CD4-positive, alpha-beta T cell (primary cell): ENCODE measurements at regions of chr11 and their contacts with region 1.

Region 1: DNA sequence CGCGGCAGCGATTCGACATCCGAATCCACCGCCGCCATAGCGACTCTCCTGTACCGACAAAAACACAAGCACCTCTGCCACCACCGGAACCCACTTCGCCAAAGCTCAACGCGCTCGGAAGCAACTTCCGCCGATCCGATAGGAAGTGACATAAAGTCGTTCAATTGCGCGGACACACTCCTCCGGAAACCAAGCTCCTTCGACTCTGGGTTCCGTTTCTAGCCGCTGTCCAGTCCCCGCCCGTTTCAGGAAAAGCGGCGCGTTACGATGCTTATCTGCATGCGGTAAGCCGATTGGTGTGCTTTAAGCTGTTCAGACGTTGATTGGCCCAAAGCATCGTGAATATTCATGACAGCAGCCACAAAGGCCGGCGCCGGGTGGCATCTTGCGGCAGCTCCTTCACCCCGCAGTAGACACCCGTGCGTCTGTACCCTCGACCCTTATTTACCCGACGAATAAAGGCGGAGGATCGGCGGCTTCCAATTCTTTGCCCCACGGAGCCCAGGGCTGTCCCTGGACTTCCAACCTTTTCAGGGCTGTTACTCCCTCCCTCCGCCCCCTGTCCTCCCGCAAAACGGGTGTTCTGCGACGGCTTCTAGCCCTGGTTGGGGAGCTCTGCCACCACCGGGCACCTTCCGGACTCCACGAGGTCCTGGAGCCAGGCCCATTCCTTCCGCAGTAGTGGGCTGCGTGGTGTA is at the start of gene TUT1:
- DNase-seq: peak; percentile 91 to 99 (median 95)
- ATAC-seq: peak; percentile 82
- H3K4me3 ChIP-seq: peak within 1 kb of the TSS; percentile 98
- H3K4me3 Mint-ChIP-seq: peak within 1 kb of the TSS; percentile 91
- H3K27ac ChIP-seq: peak within 1 kb of the TSS; percentile 95 to 97
- H3K27ac Mint-ChIP-seq: peak within 1 kb of the TSS; percentile 89
- H3K4me1 ChIP-seq: peaks cover 43% of the 10 kb centered on the region
- H3K4me1 Mint-ChIP-seq: peaks cover 72% of the 10 kb centered on the region
- H3K27me3 ChIP-seq: no peaks in the 10 kb centered on the region
- H3K27me3 Mint-ChIP-seq: no peaks in the 10 kb centered on the region
- CTCF ChIP-seq: no peak
- total RNA-seq, gene TUT1: 25.5 to 26.2 TPM

Region 2: DNA sequence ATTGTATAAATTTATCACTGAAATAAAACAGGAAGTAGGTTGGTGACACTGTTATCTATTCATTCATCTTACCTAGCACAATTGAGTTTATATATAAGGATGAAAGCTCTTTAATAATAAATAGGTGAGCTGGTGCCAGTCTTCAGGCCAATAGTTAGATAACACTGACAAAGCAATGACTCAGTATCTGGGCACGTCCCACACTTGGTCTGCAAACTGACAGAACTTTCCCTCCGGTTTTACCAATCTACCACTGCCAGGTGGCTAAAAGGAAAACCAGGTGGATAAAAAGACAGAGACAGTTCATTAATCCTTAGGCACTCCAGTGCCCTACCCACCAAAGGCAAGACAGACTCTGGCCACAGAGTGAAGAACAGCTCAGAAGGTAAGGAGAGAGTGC is 1276.3 kb before region 1 on chr11:
- CTCF ChIA-PET with region 1: no interaction called
- POLR2A ChIA-PET with region 1: no interaction called
- intact Hi-C with region 1: no loop called
- DNase-seq: no peak
- ATAC-seq: no peak
- H3K4me3 ChIP-seq: no peak overlapping the region
- H3K4me3 Mint-ChIP-seq: no peak overlapping the region
- H3K27ac ChIP-seq: no peak overlapping the region
- H3K27ac Mint-ChIP-seq: no peak overlapping the region
- H3K4me1 ChIP-seq: no peaks in the 10 kb centered on the region
- H3K4me1 Mint-ChIP-seq: no peaks in the 10 kb centered on the region
- H3K27me3 ChIP-seq: no peaks in the 10 kb centered on the region
- H3K27me3 Mint-ChIP-seq: no peaks in the 10 kb centered on the region
- CTCF ChIP-seq: no peak

Region 3: DNA sequence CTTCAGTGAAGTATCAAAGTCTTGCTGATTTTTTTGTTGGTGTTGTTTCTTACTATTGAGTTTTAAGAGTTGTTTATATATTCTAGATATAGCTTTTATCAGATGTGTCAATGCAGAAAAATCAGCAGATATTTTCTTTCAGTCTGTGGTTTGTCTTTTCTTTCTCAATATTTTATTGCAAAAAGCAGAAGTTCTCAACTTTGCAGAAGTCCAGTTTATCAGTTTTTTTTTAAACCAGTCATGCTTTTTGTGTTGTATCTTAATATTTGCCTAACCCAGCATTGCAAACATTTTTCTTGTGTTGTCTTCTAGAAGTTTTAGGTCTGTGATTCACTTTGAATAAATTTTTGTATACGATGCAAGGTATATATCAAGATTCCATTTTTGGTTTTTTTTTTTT is 247.4 kb before region 1 on chr11:
- CTCF ChIA-PET with region 1: no interaction called
- POLR2A ChIA-PET with region 1: no interaction called
- intact Hi-C with region 1: no loop called
- DNase-seq: no peak
- ATAC-seq: no peak
- H3K4me3 ChIP-seq: no peak overlapping the region
- H3K4me3 Mint-ChIP-seq: no peak overlapping the region
- H3K27ac ChIP-seq: no peak overlapping the region
- H3K27ac Mint-ChIP-seq: no peak overlapping the region
- H3K4me1 ChIP-seq: no peaks in the 10 kb centered on the region
- H3K4me1 Mint-ChIP-seq: no peaks in the 10 kb centered on the region
- H3K27me3 ChIP-seq: no peaks in the 10 kb centered on the region
- H3K27me3 Mint-ChIP-seq: peaks cover 9% of the 10 kb centered on the region
- CTCF ChIP-seq: no peak

Region 4: DNA sequence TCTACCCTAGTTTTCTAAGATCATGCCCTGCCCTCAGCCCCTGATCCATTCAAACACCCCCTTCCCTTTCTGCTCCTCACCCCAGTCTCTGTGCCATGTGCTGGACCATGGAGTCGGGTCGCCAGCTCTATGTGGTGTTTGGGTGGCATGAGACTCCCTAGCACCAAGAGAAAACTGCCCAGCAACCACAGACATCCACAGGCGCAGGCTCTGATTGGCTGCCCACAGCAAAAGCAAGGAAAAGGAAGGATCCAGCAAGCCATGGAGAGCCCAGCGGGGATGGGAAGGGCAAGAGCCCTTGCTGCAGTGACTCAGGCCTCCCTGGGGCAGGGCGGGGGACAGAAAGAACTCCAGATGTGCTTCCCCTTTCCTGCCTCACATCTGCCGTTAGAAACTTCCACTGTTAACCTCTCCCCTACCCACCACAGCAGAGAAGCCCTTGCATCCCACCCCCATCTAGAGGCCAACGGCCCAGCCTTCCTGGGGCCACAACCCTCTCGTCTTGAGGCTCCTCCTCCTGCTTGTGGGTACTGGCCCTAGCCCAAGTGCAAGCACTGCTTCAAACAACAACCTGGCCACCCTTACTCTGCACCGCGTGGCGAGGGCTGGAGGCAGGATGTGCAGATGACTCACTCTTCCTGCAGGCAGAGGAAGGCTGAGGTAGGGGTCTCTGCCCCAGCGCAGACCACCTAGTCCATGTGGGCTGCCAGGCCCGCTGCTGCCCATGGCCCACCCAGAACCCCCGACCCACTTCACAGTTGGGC is 35.3 kb before region 1 on chr11:
- CTCF ChIA-PET with region 1: interaction called, 11 read pairs
- POLR2A ChIA-PET with region 1: interaction called, 61 read pairs
- intact Hi-C with region 1: loop called in 1 of 2 experiments (anchors 5 kb)
- DNase-seq: peak; percentile 72 to 94 (median 83)
- ATAC-seq: peak; percentile 46
- H3K4me3 ChIP-seq: peak overlapping the region; percentile 49
- H3K4me3 Mint-ChIP-seq: peak overlapping the region; percentile 84
- H3K27ac ChIP-seq: peak overlapping the region; percentile 96 to 97
- H3K27ac Mint-ChIP-seq: peak overlapping the region; percentile 95
- H3K4me1 ChIP-seq: peaks cover 95% of the 10 kb centered on the region
- H3K4me1 Mint-ChIP-seq: peaks cover 84% of the 10 kb centered on the region
- H3K27me3 ChIP-seq: no peaks in the 10 kb centered on the region
- H3K27me3 Mint-ChIP-seq: no peaks in the 10 kb centered on the region
- CTCF ChIP-seq: no peak

Region 5: DNA sequence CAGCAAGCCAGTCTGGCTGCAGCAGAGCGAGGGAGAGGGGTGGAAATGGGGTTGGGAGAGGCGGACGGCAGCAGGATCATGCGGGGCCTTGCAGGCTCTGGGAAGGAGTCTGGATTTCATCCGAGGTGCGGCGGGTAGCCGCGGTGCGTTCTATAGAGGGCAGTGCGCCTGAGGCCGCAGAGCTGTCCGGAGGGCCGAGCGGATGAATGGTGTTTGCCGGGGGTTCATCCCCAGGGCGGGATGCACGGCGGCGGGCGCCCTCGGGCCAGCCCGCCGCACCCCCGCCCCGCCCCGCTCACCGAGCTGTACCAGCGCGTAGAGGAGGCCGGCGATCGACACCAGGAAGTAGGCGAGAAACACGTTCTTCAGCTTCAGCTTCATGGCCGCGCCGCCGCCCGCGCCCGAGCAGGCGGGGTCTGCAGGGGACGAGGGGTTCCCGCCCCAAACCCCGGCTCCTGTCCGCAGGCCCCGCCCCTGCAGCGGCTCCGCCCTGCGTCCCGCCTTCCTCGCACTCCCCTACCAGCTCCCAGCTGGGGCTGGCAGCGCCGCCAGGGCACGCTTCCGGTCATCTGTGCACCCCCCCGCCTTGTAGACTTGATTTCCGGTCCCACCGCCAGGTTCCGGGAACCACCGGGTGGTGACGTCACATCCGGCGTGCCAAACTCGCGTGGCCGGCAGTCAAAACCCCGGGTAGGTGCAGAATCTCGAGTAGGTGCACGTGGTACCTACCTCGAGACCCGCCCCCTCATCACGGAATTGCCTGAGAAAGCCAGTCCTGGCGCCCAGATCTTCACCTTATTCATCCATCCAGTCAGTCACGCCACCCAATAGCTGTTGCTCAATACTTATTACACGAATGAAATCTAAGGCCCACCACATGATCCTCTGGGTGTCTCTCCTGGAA is 30.2 kb after region 1 on chr11 and contains the start of gene B3GAT3:
- CTCF ChIA-PET with region 1: interaction called, 9 read pairs
- POLR2A ChIA-PET with region 1: interaction called, 80 read pairs
- intact Hi-C with region 1: loop called in 1 of 2 experiments (anchors 2 kb)
- DNase-seq: peak; percentile 91 to 99 (median 95)
- ATAC-seq: peak; percentile 82
- H3K4me3 ChIP-seq: peak within 1 kb of the TSS; percentile 69
- H3K4me3 Mint-ChIP-seq: peak within 1 kb of the TSS; percentile 95
- H3K27ac ChIP-seq: peak within 1 kb of the TSS; percentile 86 to 88
- H3K27ac Mint-ChIP-seq: peak within 1 kb of the TSS; percentile 89
- H3K4me1 ChIP-seq: peaks cover 32% of the 10 kb centered on the region
- H3K4me1 Mint-ChIP-seq: peaks cover 27% of the 10 kb centered on the region
- H3K27me3 ChIP-seq: no peaks in the 10 kb centered on the region
- H3K27me3 Mint-ChIP-seq: no peaks in the 10 kb centered on the region
- CTCF ChIP-seq: no peak
- total RNA-seq, gene B3GAT3: 47.2 to 49.5 TPM

Region 6: GRCh38 chr11:62665075-62665598 is 73.5 kb after region 1 on chr11 and contains the starts of genes C11orf98 and CSKMT:
- CTCF ChIA-PET with region 1: interaction called, 4 read pairs
- POLR2A ChIA-PET with region 1: interaction called, 155 read pairs
- intact Hi-C with region 1: loop called (anchors 5 kb)
- DNase-seq: peak; percentile 92 to 97 (median 94)
- ATAC-seq: peak; percentile 91
- H3K4me3 ChIP-seq: peak within 1 kb of the TSS; percentile 73
- H3K4me3 Mint-ChIP-seq: peak within 1 kb of the TSS; percentile 99
- H3K27ac ChIP-seq: peak within 1 kb of the TSS; percentile 80 to 88
- H3K27ac Mint-ChIP-seq: peak within 1 kb of the TSS; percentile 96
- H3K4me1 ChIP-seq: peaks cover 48% of the 10 kb centered on the region
- H3K4me1 Mint-ChIP-seq: peaks cover 36% of the 10 kb centered on the region
- H3K27me3 ChIP-seq: no peaks in the 10 kb centered on the region
- H3K27me3 Mint-ChIP-seq: no peaks in the 10 kb centered on the region
- CTCF ChIP-seq: no peak
- total RNA-seq, gene C11orf98: 14.3 to 18.5 TPM
- total RNA-seq, gene CSKMT: 17.8 to 18.8 TPM

Region 7: DNA sequence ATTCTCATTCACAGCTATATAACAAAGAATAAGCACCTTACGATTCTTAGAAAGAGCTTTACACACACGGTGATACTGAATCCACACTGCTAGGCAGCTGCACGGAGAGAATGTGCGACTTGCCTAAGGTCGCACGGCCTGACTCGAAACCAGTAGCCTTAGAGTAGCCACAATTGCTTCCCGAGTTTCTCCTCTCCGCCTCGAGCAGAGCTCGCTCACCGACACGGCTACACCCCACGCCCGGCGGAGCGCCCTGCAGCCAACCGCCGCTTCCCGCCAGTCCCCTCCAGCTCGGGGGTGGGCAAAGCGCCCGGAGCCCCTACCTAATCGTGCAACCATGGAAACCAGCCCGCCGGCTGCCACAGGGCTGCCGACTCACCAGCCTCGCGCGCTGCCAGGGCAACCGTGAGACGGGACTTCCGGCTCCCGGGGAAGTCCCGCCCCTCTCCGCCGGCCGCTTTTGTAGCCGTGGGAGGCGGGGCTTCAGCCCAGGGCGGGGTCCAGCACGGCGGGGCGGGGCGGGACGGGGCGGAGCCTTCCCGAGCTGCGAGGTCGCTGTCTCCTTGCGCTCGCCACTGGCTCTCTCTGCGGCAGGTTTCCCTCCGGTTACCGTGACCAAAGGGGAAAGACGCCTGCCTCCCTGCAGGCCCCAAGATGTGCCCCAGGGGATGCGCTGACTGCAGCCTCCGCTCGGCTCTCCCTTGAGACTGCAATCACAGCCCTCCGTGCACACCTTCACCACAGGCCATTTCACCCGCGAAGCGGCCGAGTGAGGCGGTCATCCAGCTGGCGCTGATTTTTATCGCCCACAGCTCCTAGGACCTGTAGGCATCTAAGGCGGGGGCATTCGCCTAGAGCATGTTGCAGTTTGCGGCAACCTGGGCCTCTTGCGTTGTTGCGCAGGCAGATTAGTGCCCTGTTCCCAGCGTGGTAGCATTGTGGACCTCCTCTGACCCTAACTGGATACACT is 114.6 kb after region 1 on chr11:
- CTCF ChIA-PET with region 1: interaction called, 3 read pairs
- POLR2A ChIA-PET with region 1: interaction called, 74 read pairs
- intact Hi-C with region 1: loop called (anchors 1 to 5 kb)
- DNase-seq: peak; percentile 90 to 97 (median 94)
- ATAC-seq: peak; percentile 62
- H3K4me3 ChIP-seq: peak overlapping the region; percentile 79
- H3K4me3 Mint-ChIP-seq: peak overlapping the region; percentile 86
- H3K27ac ChIP-seq: peak overlapping the region; percentile 65 to 84
- H3K27ac Mint-ChIP-seq: peak overlapping the region; percentile 92
- H3K4me1 ChIP-seq: peaks cover 49% of the 10 kb centered on the region
- H3K4me1 Mint-ChIP-seq: peaks cover 42% of the 10 kb centered on the region
- H3K27me3 ChIP-seq: no peaks in the 10 kb centered on the region
- H3K27me3 Mint-ChIP-seq: no peaks in the 10 kb centered on the region
- CTCF ChIP-seq: no peak

Region 8: DNA sequence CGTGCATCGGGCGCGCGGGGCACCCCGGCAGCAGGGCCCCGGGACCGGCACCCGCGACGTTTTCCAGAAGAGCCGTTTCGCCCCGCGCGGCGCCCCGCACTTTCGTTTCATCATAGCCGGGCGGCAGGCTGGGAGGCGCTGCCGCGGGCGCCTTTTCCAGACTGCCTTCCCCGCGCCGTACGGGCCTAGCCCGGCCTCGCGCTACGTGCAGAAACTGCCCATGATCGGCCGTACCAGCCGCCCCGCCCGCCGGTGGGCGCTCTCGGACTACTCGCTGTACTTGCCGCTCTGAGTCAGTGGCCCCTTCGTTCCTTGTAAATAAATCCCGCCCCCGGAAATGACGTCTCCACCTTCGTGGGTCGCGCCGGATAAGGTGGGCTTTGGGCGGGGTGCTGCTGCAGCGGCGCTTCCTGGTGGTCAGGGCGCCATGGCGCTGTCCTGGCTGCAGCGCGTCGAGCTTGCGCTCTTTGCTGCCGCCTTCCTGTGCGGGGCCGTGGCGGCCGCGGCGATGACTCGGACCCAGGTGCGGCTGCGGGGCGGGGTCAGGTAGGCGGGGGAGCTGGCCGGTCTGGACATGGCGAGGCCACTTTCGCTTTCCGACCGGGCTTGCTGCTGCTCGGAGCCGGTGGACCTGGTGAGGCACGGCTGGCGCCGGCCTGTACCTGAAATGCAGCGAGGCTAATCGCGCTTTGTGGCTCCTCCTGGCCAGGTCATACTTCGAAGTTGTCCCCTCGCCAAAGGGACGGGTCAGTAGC is 195.6 kb after region 1 on chr11 and contains the start of gene TMEM179B:
- CTCF ChIA-PET with region 1: interaction called, 7 read pairs
- POLR2A ChIA-PET with region 1: interaction called, 16 read pairs
- intact Hi-C with region 1: loop called in 1 of 2 experiments (anchors 5 kb)
- DNase-seq: peak; percentile 90 to 99 (median 97)
- ATAC-seq: peak; percentile 61
- H3K4me3 ChIP-seq: peak within 1 kb of the TSS; percentile 77
- H3K4me3 Mint-ChIP-seq: peak within 1 kb of the TSS; percentile 98
- H3K27ac ChIP-seq: peak within 1 kb of the TSS; percentile 80 to 92
- H3K27ac Mint-ChIP-seq: peak within 1 kb of the TSS; percentile 98
- H3K4me1 ChIP-seq: peaks cover 53% of the 10 kb centered on the region
- H3K4me1 Mint-ChIP-seq: peaks cover 55% of the 10 kb centered on the region
- H3K27me3 ChIP-seq: no peaks in the 10 kb centered on the region
- H3K27me3 Mint-ChIP-seq: no peaks in the 10 kb centered on the region
- CTCF ChIP-seq: no peak
- total RNA-seq, gene TMEM179B: 34.7 to 37.4 TPM

Region 9: GRCh38 chr11:62860835-62861563 is 269.4 kb after region 1 on chr11:
- CTCF ChIA-PET with region 1: no interaction called
- POLR2A ChIA-PET with region 1: interaction called, 50 read pairs
- intact Hi-C with region 1: loop called (anchors 5 kb)
- DNase-seq: no peak
- ATAC-seq: no peak
- H3K4me3 ChIP-seq: no peak overlapping the region
- H3K4me3 Mint-ChIP-seq: no peak overlapping the region
- H3K27ac ChIP-seq: no peak overlapping the region
- H3K27ac Mint-ChIP-seq: no peak overlapping the region
- H3K4me1 ChIP-seq: peaks cover 18% of the 10 kb centered on the region
- H3K4me1 Mint-ChIP-seq: peaks cover 18% of the 10 kb centered on the region
- H3K27me3 ChIP-seq: no peaks in the 10 kb centered on the region
- H3K27me3 Mint-ChIP-seq: no peaks in the 10 kb centered on the region
- CTCF ChIP-seq: no peak